A549 (cell line): ENCODE measurements at regions of chr7 and their contacts with region 1.

Region 1: GRCh38 chr7:155380221-155380861 is 77.6 kb upstream of the EN2 start:
- DNase-seq: peak; percentile 77 to 93
- ATAC-seq: peak; percentile 83 to 93
- H3K4me3 ChIP-seq: no peak overlapping the region
- H3K27ac ChIP-seq: no peak overlapping the region
- H3K4me1 ChIP-seq: peaks cover 5% of the 10 kb centered on the region; the same call in 1 of the 3 replicates
- CTCF ChIP-seq: peak; percentile 68
- EP300 ChIP-seq: no peak
- POLR2A ChIP-seq: no peak
- RAD21 ChIP-seq: peak; percentile 66 to 70

Region 2: GRCh38 chr7:155395176-155395779 is 14.9 kb after region 1 on chr7:
- CTCF ChIA-PET with region 1: interaction called, 11 read pairs
- POLR2A ChIA-PET with region 1: no interaction called
- DNase-seq: no peak
- ATAC-seq: no peak
- H3K4me3 ChIP-seq: no peak overlapping the region
- H3K27ac ChIP-seq: no peak overlapping the region
- H3K4me1 ChIP-seq: no peaks in the 10 kb centered on the region
- CTCF ChIP-seq: no peak
- EP300 ChIP-seq: no peak
- POLR2A ChIP-seq: no peak
- RAD21 ChIP-seq: no peak

Region 3: DNA sequence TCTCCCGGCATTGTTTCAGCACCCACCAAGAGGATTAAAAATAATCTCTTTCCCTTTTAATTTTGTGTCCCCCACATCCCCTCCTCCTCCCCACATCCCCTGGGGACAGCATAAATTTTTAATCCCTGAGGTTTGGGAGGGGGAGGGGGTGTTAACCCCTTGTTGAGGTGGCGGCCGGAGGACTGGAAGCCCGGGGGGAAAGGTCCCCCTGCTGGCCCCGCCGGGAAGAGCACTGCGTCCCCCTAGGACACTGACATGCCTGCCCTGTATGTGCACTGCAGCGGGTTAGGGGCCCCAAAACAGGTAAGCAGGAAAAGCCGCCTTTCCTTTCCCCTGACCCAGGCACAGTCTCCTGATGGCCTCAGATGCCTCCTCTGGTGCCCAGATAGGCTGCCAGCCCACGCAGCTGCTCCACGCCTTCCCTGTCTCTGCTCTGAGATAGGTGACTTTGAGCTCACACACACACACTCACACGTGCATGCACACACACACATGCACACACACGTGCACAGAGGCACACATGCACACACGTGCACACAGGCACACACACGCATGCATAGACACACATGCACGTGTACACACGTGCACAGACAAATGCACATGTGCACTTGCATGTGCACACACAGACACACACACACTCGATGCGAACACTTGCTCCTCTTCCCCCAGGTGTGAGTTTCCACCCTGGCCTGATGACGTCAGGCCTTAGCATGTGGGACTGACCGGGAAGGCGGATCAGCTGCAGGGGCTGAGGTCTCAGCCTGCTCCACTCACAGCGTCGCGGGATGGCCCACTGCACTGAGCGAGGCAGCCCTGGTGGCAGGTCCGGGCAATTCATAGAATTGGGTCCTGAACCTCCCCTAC is 153.7 kb after region 1 on chr7:
- CTCF ChIA-PET with region 1: interaction called, 24 read pairs
- POLR2A ChIA-PET with region 1: no interaction called
- DNase-seq: peak; percentile 36 to 87
- ATAC-seq: peak; percentile 81 to 92
- H3K4me3 ChIP-seq: peak overlapping the region; percentile 31
- H3K27ac ChIP-seq: peak overlapping the region in 1 of 2 experiments; percentile 46; a peak in 2 of 6 replicates
- H3K4me1 ChIP-seq: no peaks in the 10 kb centered on the region
- CTCF ChIP-seq: peak; percentile 60
- EP300 ChIP-seq: no peak
- POLR2A ChIP-seq: no peak
- RAD21 ChIP-seq: peak; percentile 51 to 56

Region 4: GRCh38 chr7:155769701-155770100 is 389.4 kb after region 1 on chr7:
- CTCF ChIA-PET with region 1: interaction called, 11 read pairs
- POLR2A ChIA-PET with region 1: no interaction called
- DNase-seq: no peak
- ATAC-seq: no peak
- H3K4me3 ChIP-seq: no peak overlapping the region
- H3K27ac ChIP-seq: no peak overlapping the region
- H3K4me1 ChIP-seq: no peaks in the 10 kb centered on the region
- CTCF ChIP-seq: no peak
- EP300 ChIP-seq: no peak
- POLR2A ChIP-seq: no peak
- RAD21 ChIP-seq: no peak